RWPE1 (cell line): ENCODE measurements at regions of chr4 and their contacts with region 1.

Region 1: DNA sequence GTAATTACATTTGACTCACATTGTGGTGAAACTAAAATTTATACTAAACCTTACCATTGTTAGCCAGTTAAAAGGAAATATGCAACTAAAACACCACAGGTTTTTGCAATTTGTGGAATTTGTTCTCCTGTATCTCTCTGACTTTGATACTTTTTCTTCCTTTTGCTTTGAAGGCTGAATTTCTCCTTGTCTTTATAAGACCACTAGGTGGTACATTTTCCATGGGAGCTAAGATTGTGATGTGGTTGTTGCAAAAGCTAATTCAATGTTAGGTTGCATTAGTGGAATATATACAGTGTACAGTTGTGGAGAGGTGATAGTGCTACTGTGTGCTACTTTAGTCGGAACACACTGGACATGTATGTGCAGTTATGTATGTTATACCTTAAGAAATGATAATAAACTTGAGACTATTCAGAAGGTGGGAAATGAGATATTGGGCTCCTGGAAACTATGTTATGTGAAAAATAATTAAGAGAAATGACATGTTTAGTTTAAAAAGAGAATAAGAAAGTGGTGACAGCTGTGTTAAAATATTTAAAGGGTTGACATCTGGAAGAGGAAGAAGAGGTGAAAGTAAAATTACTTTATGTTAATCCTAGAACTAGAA is 70.3 kb downstream of the ARL9 start:
- DNase-seq: peak; percentile 46
- H3K27ac ChIP-seq: no peak overlapping the region
- CTCF ChIP-seq: peak; percentile 63

Region 2: GRCh38 chr4:56799824-56800756 is 224.2 kb after region 1 on chr4:
- CTCF ChIA-PET with region 1: interaction called, 10 read pairs
- POLR2A ChIA-PET with region 1: no interaction called
- DNase-seq: peak; percentile 81
- H3K27ac ChIP-seq: peak overlapping the region; percentile 55
- CTCF ChIP-seq: peak; percentile 90